Activated CD4-positive, alpha-beta T cell treated with anti-CD3 and anti-CD28 coated beads for 36 hours (primary cell): ENCODE measurements at regions of chr10 and their contacts with region 1.

Region 1: DNA sequence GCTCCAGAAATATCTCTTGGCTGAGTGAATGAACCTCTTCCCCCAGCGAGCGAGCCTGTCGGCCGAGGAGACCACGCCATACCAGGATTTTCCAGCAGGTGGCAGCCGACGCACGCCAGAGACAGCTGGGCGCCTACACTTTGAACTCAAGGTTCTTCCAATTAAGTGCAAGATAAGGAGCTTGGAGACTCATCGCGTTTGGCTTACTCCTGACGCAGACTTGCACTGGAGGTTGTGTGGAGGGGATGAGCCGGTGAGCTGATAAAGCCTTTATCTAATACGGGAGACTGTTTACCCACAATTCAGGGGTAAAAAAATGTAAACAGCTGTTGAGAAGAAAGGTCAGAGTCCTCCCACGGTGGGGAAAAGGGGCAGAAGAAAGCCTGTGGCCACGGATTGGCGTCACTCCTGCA is 45.9 kb upstream of the EMX2 start:
- DNase-seq: peak; percentile 82
- ATAC-seq: peak; percentile 72
- H3K4me3 Mint-ChIP-seq: no peak overlapping the region
- H3K27ac Mint-ChIP-seq: no peak overlapping the region
- H3K4me1 Mint-ChIP-seq: peaks cover 2% of the 10 kb centered on the region
- H3K27me3 Mint-ChIP-seq: peaks cover 30% of the 10 kb centered on the region

Region 2: GRCh38 chr10:118241229-118242137 is 744.9 kb after region 1 on chr10:
- CTCF ChIA-PET with region 1: interaction called, 59 read pairs
- POLR2A ChIA-PET with region 1: no interaction called
- intact Hi-C with region 1: loop called (anchors 1 kb)
- DNase-seq: peak; percentile 81
- ATAC-seq: no peak
- H3K4me3 Mint-ChIP-seq: no peak overlapping the region
- H3K27ac Mint-ChIP-seq: no peak overlapping the region
- H3K4me1 Mint-ChIP-seq: no peaks in the 10 kb centered on the region
- H3K27me3 Mint-ChIP-seq: peaks cover 36% of the 10 kb centered on the region

Region 3: DNA sequence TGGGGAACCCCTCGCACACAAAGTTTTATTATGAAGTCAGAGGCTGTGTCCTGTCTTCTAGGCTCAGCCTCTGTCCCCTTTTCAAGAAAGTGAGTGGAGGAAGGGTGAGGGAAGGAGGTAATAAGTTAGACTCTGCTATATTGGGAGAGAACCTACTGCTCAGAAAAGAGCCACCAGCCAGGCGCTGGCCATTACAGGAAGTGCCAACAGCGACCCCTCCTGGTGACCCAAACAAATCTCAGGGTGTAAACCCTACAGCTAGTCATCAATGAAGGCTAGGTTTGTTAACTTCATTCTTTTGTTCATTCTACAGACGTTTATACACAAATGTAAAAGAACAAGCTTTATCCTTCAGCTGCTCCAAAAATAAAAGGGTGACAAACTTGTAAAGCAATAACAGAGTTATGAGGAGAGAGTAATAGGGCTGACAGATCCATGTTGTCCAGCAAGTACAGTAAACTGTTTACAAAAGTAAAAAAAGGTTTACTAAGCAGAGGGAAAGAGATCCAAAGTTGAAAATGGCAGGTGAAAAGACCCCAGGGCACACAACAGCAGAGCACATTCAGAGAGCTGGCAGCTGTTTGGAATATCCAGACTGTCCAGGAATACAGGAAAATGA is 762.8 kb after region 1 on chr10:
- CTCF ChIA-PET with region 1: interaction called, 24 read pairs
- POLR2A ChIA-PET with region 1: no interaction called
- intact Hi-C with region 1: loop called in 1 of 2 experiments (anchors 1 kb)
- DNase-seq: peak; percentile 73
- ATAC-seq: peak; percentile 53
- H3K4me3 Mint-ChIP-seq: no peak overlapping the region
- H3K27ac Mint-ChIP-seq: no peak overlapping the region
- H3K4me1 Mint-ChIP-seq: no peaks in the 10 kb centered on the region
- H3K27me3 Mint-ChIP-seq: peaks cover 36% of the 10 kb centered on the region

Region 4: DNA sequence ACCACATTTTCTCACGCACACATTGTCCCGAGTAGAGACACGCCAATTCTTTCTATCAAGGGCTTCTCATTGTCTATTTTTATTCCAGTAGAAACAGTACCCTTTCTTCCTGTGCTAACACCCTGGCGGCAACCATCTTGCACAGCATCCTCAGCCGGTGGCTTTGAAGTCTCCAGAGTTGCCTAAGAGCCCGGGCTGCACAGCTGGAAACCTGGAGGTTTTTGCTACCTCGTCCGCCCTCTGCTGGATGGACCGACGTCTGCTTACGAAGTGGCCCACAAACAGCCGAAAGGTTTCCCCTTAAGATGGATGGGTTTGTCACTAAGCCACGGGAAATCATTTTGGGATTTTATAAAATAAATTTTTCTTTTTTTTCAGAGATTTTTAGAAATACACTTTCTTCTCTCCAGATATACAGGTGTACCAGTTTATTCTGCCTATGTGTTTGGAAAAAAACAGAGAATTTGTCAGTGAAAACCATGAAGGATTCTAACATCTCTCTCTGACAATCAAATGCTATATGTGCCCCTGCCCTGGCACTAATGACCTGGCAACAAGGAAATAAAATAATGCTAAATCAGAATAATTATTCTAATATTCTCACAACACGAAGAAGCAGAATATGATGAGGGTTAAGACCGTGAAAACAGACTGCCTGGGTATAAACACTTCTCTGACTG is 927.3 kb after region 1 on chr10:
- CTCF ChIA-PET with region 1: interaction called, 4 read pairs
- POLR2A ChIA-PET with region 1: no interaction called
- intact Hi-C with region 1: loop called (anchors 1 to 2 kb)
- DNase-seq: peak; percentile 87
- ATAC-seq: peak; percentile 94
- H3K4me3 Mint-ChIP-seq: no peak overlapping the region
- H3K27ac Mint-ChIP-seq: no peak overlapping the region
- H3K4me1 Mint-ChIP-seq: peaks cover 2% of the 10 kb centered on the region
- H3K27me3 Mint-ChIP-seq: peaks cover 24% of the 10 kb centered on the region

Region 5: GRCh38 chr10:118459726-118460193 is 963.1 kb after region 1 on chr10:
- CTCF ChIA-PET with region 1: interaction called, 22 read pairs
- POLR2A ChIA-PET with region 1: no interaction called
- intact Hi-C with region 1: loop called (anchors 1 to 2 kb)
- DNase-seq: peak; percentile 69
- ATAC-seq: peak; percentile 84
- H3K4me3 Mint-ChIP-seq: no peak overlapping the region
- H3K27ac Mint-ChIP-seq: no peak overlapping the region
- H3K4me1 Mint-ChIP-seq: peaks cover 4% of the 10 kb centered on the region
- H3K27me3 Mint-ChIP-seq: peaks cover 27% of the 10 kb centered on the region

Region 6: DNA sequence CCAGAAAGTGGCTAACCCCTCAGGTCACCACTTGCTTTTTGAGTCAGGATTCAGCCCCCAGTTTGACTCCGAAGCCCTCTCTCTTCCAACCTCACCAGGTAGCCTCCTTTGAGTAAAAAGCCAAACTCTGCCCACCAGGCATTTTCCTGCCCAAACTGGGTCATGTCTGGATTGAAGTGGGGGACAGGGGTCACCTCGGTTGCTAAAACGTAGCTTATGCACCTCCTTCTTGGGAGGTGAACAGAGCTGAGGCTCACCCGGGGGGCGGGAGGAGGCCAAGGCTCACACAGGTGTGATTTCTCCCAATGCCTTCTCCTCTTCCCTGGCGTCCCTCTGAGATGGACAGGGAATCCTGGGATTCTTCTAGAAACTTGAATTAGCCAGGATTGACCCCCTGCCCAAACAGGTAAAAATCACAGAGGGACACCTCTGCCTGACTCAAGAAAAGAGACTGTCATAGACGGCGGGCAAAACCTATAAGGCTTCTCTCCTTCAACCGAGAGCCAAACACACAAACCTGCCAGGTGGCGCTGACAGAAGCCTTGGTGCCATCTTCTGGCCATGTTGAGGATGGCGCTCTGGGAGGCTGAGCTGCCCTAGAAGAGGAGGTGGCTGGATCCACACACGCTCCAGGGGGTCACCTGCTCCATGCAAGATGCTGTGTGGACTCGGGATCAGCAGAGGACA is 1047.2 kb after region 1 on chr10:
- CTCF ChIA-PET with region 1: no interaction called
- POLR2A ChIA-PET with region 1: no interaction called
- intact Hi-C with region 1: loop called in 1 of 2 experiments (anchors 10 kb)
- DNase-seq: peak; percentile 70
- ATAC-seq: peak; percentile 73
- H3K4me3 Mint-ChIP-seq: no peak overlapping the region
- H3K27ac Mint-ChIP-seq: no peak overlapping the region
- H3K4me1 Mint-ChIP-seq: no peaks in the 10 kb centered on the region
- H3K27me3 Mint-ChIP-seq: peaks cover 28% of the 10 kb centered on the region